Activated CD4-positive, alpha-beta memory T cell treated with anti-CD3 and anti-CD28 coated beads, Interleukin-2, amount 10 ng/mL, durations not matched to agents 7 days and 5 days (primary cell): ENCODE measurements at regions of chr1 and their contacts with region 1.

Region 1: DNA sequence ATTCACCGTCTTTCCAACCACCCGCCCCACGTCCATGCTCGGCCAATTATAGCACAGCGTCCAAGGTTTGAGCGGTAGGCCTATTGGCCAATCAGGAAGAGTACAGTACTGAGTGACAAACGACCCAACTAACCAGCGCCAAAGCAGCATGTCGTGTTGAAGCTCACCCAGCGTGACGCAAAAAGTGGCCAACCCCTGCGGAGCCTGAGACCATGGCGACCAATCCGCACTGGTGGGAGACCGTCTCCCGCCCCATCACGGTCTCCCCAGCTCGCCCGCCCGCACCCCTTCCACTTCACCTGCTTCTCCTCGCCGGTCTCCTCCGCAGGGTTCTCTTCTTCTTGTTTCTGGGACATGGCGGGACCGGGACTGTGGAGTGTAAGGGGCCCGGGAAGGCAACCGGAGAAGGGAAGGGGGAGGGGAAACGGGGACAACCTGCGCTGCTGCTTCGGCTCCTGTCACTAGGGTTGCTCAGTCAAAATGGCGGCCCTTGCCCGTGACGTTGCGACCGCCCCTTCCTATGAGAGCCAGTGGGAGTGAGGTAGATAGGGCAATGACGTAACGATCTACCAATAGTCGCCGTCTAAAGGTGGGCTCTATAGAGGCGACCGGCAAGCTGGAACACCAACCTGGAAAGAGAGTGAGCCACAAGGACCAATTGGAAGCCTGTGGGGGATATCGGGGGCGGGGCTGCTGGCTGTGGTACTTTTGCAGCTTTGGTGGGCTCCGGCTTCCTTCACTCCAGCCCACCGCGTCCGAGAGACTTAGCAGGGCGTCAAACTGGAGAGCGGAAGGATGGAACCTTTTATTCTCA is at the start of gene ENSA:
- DNase-seq: peak; percentile 97
- H3K4me3 Mint-ChIP-seq: no peak within 1 kb of the TSS
- H3K27ac Mint-ChIP-seq: no peak within 1 kb of the TSS
- H3K4me1 Mint-ChIP-seq: peaks cover 28% of the 10 kb centered on the region
- H3K27me3 Mint-ChIP-seq: no peaks in the 10 kb centered on the region
- total RNA-seq, gene ENSA: 221 to 223 TPM

Region 2: DNA sequence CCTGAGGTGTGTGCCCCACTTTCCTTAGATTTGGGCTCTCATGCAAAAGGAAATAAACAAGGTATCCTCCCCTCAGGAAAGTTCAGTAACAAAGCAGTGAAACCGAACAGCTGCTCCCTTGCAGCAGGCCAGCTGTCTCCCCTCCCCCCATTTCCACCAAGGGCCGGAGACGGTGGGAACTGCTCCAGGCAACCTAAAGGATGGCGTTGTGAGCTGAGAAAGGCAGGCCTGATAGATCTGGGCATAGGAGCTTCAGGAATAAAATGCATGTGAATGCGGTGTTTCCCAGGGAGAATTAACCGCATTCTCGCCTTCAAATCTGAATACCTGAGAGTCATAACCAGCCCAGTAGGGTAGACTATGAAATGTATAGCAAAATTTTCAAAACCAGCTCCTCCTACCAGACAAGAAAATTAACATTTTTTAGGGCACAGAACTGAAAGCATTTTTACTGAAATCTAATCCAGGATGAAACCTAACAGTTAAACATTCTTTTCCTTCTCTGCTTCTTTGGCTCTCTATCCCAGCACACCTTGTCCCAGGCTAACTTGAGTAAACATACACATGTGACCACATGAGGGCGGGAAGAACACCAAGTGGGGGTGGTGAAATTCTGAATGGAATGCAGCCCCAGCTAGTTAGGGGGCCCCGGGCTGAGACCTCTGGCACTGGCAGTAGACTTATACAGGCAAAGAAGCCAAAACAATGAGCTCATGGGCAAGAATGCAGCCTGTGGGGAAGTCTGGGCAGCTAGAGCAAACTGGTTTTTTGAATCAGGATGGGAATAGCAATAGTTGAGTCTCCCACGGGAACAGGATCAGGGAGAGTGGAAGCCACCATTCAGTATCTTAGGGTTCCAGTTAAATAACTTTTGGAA is 61.4 kb before region 1 on chr1:
- CTCF ChIA-PET with region 1: interaction called, 264 read pairs
- POLR2A ChIA-PET with region 1: interaction called, 402 read pairs
- DNase-seq: peak; percentile 69
- H3K4me3 Mint-ChIP-seq: peak overlapping the region; percentile 78
- H3K27ac Mint-ChIP-seq: peak overlapping the region; percentile 99
- H3K4me1 Mint-ChIP-seq: peaks cover 93% of the 10 kb centered on the region
- H3K27me3 Mint-ChIP-seq: no peaks in the 10 kb centered on the region

Region 3: DNA sequence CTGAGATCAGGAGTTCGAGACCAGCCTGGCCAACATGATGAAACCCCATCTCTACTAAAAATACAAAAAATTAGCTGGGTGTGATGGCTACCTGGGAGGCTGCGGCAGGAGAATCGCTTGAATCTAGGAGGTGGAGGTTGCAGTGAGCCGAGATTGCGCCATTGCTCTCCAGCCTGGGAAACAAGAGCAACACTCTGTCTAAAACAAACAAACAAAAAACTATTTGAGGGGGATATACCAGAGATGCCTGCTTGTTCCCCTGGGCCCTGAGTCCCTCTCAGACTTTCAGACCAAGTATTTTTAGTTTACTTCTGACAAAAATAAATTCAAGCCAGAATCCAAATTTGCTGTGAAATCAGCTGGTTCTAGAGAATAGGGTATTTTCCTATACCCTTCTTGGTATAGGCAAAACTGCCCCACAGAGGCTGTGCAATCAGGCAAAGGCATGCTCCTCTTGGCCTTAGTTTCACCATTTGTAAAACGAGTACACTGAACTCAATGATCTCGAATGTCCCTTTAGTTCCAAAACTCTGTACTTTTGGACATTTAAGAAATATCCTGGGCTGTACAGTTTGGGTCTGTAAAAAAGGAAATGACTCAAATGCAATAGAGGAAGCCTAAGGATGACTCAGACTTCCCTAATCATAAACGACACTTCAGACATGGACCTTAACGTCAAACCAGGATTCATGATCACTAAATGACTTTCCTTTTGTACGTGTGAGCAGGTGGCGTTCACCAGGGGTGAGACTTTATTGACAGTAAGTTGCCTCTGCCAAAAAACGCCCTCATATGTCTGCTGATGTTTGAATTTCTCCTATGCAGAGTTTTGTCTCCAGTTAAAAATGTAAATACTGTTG is 16.0 kb before region 1 on chr1:
- CTCF ChIA-PET with region 1: interaction called, 4 read pairs
- POLR2A ChIA-PET with region 1: interaction called, 24 read pairs
- DNase-seq: peak; percentile 62
- H3K4me3 Mint-ChIP-seq: peak overlapping the region; percentile 40
- H3K27ac Mint-ChIP-seq: peak overlapping the region; percentile 82
- H3K4me1 Mint-ChIP-seq: peaks cover 69% of the 10 kb centered on the region
- H3K27me3 Mint-ChIP-seq: no peaks in the 10 kb centered on the region

Region 4: GRCh38 chr1:150696590-150697524 is 67.5 kb after region 1 on chr1 and contains the start of gene GOLPH3L:
- CTCF ChIA-PET with region 1: interaction called, 7 read pairs
- POLR2A ChIA-PET with region 1: interaction called, 18 read pairs
- DNase-seq: peak; percentile 93
- H3K4me3 Mint-ChIP-seq: peak within 1 kb of the TSS; percentile 100
- H3K27ac Mint-ChIP-seq: peak within 1 kb of the TSS; percentile 82
- H3K4me1 Mint-ChIP-seq: peaks cover 23% of the 10 kb centered on the region
- H3K27me3 Mint-ChIP-seq: peaks cover 8% of the 10 kb centered on the region
- total RNA-seq, gene GOLPH3L: 24.8 to 26.5 TPM

Region 5: GRCh38 chr1:150765296-150765976 is 136.1 kb after region 1 on chr1 and contains the start of gene CTSS:
- CTCF ChIA-PET with region 1: interaction called, 3 read pairs
- POLR2A ChIA-PET with region 1: interaction called, 10 read pairs
- DNase-seq: no peak
- H3K4me3 Mint-ChIP-seq: peak within 1 kb of the TSS; percentile 83
- H3K27ac Mint-ChIP-seq: peak within 1 kb of the TSS; percentile 81
- H3K4me1 Mint-ChIP-seq: peaks cover 36% of the 10 kb centered on the region
- H3K27me3 Mint-ChIP-seq: peaks cover 2% of the 10 kb centered on the region
- total RNA-seq, gene CTSS: 123 to 127 TPM